ENCODE measurements at regions of chr13 and their contacts with region 1.

Region 1: DNA sequence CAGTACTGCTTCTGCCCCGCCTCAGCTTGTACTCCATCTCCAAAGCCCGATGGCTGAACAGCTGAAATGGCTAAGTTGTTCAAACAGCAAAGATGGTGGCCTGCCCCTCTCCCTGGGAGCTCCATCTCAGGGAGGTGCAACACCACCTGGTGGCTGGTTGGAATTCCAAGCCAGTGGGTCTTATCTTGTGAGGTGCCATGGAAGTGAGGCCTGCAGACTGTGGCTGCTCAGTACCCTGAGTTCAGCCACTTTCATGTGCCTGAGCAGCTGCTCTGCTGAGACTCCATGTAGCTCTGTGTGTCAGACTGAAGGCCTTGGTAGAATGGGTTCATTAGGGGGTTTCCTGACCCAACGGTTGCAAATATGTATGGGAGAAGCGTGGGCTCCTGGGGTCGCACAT is 67.3 kb upstream of the SPRY2 start:
- DNase-seq: no peak
- ATAC-seq: peak; percentile 75
- H3K4me3 ChIP-seq: no peak overlapping the region
- H3K27ac ChIP-seq: no peak overlapping the region
- H3K4me1 ChIP-seq: no peaks in the 10 kb centered on the region
- H3K27me3 ChIP-seq: no peaks in the 10 kb centered on the region
- CTCF ChIP-seq: 0 out of 6 replicates have a peak, but pooled peaks of 1 of the 3 experiments have one; percentile 17
- EP300 ChIP-seq: no peak
- POLR2A ChIP-seq: no peak
- RAD21 ChIP-seq: no peak

Region 2: DNA sequence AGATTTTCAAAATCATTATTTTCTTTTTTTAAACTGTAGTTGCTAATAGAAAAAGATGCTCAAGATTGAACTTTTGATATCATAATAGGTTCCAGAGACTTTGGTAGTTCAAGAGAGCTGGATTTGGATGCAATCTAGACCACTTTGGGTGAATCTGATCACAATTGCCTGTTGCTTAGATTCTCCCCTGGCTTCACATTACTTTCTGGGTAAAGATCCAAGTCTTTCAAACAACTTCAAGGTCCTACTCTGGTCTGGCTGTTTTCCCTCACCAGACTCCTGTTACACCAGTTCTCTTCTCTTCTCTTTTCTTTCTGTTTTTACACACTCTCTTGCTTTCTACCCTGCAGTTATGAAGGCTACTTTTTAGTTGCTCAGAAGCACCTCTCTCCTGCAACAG is 60.0 kb before region 1 on chr13:
- CTCF ChIA-PET with region 1: interaction called, 30 read pairs
- POLR2A ChIA-PET with region 1: interaction called, 5 read pairs
- RAD21 ChIA-PET with region 1: interaction called, 111 read pairs
- SMC1A ChIA-PET with region 1: interaction called, 84 read pairs
- in situ Hi-C with region 1: no loop called
- intact Hi-C with region 1: no loop called
- DNase-seq: no peak
- ATAC-seq: no peak; the same call in 2 of the 3 replicates
- H3K4me3 ChIP-seq: no peak overlapping the region
- H3K27ac ChIP-seq: no peak overlapping the region
- H3K4me1 ChIP-seq: no peaks in the 10 kb centered on the region
- H3K27me3 ChIP-seq: no peaks in the 10 kb centered on the region
- CTCF ChIP-seq: no peak
- EP300 ChIP-seq: no peak
- POLR2A ChIP-seq: no peak
- RAD21 ChIP-seq: no peak

Region 3: GRCh38 chr13:80419416-80419815 is 11.1 kb after region 1 on chr13:
- CTCF ChIA-PET with region 1: interaction called, 19 read pairs
- POLR2A ChIA-PET with region 1: interaction called, 4 read pairs
- RAD21 ChIA-PET with region 1: interaction called, 49 read pairs
- SMC1A ChIA-PET with region 1: interaction called, 133 read pairs
- in situ Hi-C with region 1: no loop called
- intact Hi-C with region 1: no loop called
- DNase-seq: no peak
- ATAC-seq: peak; percentile 63
- H3K4me3 ChIP-seq: no peak overlapping the region
- H3K27ac ChIP-seq: no peak overlapping the region
- H3K4me1 ChIP-seq: no peaks in the 10 kb centered on the region
- H3K27me3 ChIP-seq: no peaks in the 10 kb centered on the region
- CTCF ChIP-seq: no peak
- EP300 ChIP-seq: no peak
- POLR2A ChIP-seq: no peak
- RAD21 ChIP-seq: no peak

Region 4: GRCh38 chr13:80444240-80445015 is 36.2 kb after region 1 on chr13:
- CTCF ChIA-PET with region 1: interaction called, 4 read pairs
- POLR2A ChIA-PET with region 1: interaction called, 5 read pairs
- RAD21 ChIA-PET with region 1: interaction called, 28 read pairs
- SMC1A ChIA-PET with region 1: interaction called, 707 read pairs
- in situ Hi-C with region 1: no loop called
- intact Hi-C with region 1: no loop called
- DNase-seq: no peak
- ATAC-seq: peak; percentile 51
- H3K4me3 ChIP-seq: no peak overlapping the region
- H3K27ac ChIP-seq: no peak overlapping the region
- H3K4me1 ChIP-seq: no peaks in the 10 kb centered on the region
- H3K27me3 ChIP-seq: no peaks in the 10 kb centered on the region
- CTCF ChIP-seq: no peak
- EP300 ChIP-seq: no peak
- POLR2A ChIP-seq: no peak
- RAD21 ChIP-seq: no peak

Region 5: GRCh38 chr13:80477661-80478443 is 69.6 kb after region 1 on chr13:
- CTCF ChIA-PET with region 1: interaction called, 4 read pairs
- POLR2A ChIA-PET with region 1: interaction called, 4 read pairs
- RAD21 ChIA-PET with region 1: interaction called, 9 read pairs
- SMC1A ChIA-PET with region 1: interaction called, 13 read pairs
- in situ Hi-C with region 1: no loop called
- intact Hi-C with region 1: no loop called
- DNase-seq: no peak
- ATAC-seq: peak; percentile 80
- H3K4me3 ChIP-seq: no peak overlapping the region
- H3K27ac ChIP-seq: no peak overlapping the region
- H3K4me1 ChIP-seq: no peaks in the 10 kb centered on the region
- H3K27me3 ChIP-seq: no peaks in the 10 kb centered on the region
- CTCF ChIP-seq: no peak
- EP300 ChIP-seq: peak; percentile 93 to 96
- POLR2A ChIP-seq: no peak
- RAD21 ChIP-seq: no peak